Posterior vena cava (tissue), 2 donors: ENCODE measurements at regions of chr10 and their contacts with region 1.

Region 1: DNA sequence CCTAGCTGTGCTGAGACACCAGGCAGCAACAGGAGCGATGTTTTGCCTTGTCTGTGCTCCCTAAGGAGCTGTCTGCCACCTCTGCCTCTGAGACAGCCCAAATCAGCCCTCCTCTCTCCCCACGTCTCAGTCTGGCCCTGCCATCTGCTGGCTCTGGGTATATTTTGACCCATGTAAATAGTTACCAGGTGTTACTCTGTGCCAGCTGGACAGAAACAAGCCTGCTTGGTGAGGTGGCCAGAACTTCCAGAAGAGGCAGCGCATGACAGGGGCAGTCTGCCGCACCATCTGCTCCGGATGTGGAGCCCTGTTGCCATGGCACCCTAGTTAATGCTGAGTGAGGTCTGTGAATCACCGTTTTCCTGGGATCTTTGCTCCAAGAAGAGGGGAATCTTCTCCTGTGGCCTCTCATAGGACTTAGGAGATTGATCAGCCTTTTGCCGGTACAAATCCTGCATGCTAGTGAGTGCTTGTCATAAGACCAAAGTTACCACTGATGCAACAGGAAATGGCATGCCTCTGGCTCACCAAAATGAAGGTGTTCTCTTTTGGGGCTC is 31.8 kb downstream of the GSTO2 start:
- DNase-seq: no peak

Region 2: DNA sequence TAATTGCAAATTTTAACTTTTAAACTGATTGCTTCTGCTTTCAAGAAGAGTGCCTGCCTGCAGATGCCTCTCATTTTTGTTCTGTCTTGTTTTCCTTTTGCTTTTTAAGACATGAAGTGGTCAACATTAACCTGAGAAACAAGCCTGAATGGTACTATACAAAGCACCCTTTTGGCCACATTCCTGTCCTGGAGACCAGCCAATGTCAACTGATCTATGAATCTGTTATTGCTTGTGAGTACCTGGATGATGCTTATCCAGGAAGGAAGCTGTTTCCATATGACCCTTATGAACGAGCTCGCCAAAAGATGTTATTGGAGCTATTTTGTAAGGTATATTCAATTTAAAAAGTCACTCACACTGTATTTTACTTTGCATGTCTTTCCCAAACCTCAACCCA is 23.0 kb before region 1 on chr10:
- intact Hi-C with region 1: no loop called
- DNase-seq: no peak

Region 3: DNA sequence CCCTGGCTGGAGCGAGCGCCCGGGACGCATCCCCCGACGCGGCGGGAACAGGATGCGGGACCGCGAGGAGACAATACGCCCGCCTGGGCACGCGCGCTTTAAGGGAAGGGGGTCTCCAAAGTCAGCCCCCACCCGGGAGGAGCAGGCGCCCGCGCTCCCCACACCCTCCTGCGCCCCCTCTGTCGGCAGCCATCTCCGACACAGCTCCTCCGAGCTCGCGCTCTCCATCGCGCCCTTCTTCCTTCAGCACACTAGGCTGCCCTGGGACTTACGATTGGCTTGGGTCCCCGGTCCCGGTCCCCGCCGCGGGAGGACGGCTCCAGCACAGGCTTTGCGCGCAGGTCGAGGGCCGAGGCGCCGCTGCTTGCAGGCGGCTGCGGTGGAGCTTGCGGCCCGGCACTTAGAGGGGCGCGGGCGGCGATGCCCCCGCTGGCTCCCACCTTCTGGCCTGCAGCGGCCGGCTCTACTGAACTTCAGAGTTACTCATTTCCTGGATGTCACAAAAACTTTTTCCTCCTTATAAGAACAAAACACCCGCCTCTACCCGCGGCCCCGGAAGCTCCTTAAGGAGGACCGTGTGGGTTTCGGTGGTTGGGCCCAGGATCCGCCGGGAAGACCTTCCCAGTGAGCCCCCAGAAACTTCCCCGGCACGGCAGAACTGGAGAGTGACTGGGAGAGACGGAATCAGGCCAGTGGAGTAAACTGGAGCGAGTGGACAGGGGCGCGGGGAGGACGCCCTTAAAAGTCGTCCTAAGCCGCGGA is 37.3 kb after region 1 on chr10 and contains the start of gene ITPRIP:
- intact Hi-C with region 1: loop called (anchors 5 kb)
- DNase-seq: peak; percentile 93
- total RNA-seq, gene ITPRIP: 22.4 to 36.8 TPM

Region 4: GRCh38 chr10:104353325-104354048 is 52.7 kb after region 1 on chr10 and contains the start of gene CFAP58:
- intact Hi-C with region 1: loop called in 1 of 2 experiments (anchors 5 kb)
- DNase-seq: peak; percentile 98
- total RNA-seq, gene CFAP58: 0.46 to 0.86 TPM